Activated B cell treated with CpG ODN at 0.5 μM for 24 hours (primary cell): ENCODE measurements at regions of chr3 and their contacts with region 1.

Region 1: DNA sequence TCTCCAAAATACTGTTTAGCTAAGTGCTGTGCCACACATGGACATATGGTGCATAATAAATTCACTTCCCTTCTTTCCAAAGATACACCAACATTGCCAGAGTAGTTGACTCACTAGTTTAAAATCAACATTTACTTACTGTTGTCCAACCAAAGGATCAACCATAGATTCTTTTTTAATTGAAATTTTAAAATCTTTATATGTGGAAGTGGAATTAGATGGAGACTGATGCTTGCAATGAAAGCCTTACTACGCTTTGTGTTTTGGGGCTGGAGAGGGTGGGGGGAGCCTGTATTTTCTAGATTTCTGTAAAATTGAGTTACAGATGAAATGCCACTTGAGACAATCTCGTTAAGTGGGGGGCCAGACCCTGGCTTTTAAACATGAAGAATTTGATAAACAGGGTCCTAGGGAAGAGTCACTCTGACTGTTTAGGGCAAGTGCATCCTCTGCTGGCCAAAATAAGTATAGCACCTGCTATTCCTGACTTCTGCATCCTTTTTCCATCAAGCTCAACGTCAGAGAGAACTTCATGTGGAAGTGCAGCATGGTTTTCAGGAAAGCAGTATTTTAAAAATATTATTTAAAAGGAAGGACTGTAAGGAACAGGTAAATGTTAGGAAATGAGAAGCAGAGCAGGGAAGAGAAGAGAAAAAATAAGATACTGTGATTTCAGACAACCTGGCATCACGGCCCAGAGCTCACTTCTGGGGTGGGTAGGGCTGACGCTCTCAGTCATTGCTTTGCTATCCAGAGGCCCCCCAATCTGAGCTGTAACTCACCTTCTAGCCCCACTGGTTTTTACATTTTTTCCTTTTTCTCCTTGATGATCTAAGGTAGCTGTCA is 76.7 kb downstream of the BOC start:
- DNase-seq: no peak
- ATAC-seq: peak; percentile 45
- H3K4me3 Mint-ChIP-seq: no peak overlapping the region
- H3K27ac Mint-ChIP-seq: no peak overlapping the region
- H3K4me1 Mint-ChIP-seq: no peaks in the 10 kb centered on the region
- H3K27me3 Mint-ChIP-seq: no peaks in the 10 kb centered on the region
- CTCF ChIP-seq: peak; percentile 59

Region 2: GRCh38 chr3:112582244-112582874 is 705.7 kb before region 1 on chr3:
- CTCF ChIA-PET with region 1: interaction called, 12 read pairs
- POLR2A ChIA-PET with region 1: no interaction called
- intact Hi-C with region 1: loop called (anchors 1 kb)
- DNase-seq: no peak
- ATAC-seq: no peak
- H3K4me3 Mint-ChIP-seq: no peak overlapping the region
- H3K27ac Mint-ChIP-seq: no peak overlapping the region
- H3K4me1 Mint-ChIP-seq: peaks cover 42% of the 10 kb centered on the region
- H3K27me3 Mint-ChIP-seq: no peaks in the 10 kb centered on the region
- CTCF ChIP-seq: peak; percentile 59

Region 3: DNA sequence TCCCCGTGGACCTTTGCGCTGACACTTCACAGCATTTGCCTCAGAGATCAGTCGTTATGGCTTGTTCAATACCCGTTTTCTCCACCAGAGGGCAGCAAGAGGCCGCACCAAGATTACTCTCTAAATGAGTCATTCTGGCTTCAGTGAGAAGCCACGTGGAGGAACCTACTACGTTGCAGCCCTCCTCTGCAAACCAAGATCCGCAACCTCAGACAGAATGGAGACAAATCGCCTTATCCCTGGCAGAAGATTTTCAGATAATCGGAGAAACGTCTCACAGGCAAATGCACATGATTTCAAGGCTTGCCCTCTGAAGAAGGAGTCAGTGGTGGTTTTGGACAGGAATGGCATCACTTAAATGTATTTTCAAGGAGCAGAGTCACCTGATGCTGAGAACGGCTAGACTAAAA is 236.7 kb before region 1 on chr3:
- CTCF ChIA-PET with region 1: interaction called, 44 read pairs
- POLR2A ChIA-PET with region 1: no interaction called
- intact Hi-C with region 1: loop called (anchors 1 kb)
- DNase-seq: peak; percentile 68
- ATAC-seq: peak; percentile 99
- H3K4me3 Mint-ChIP-seq: no peak overlapping the region
- H3K27ac Mint-ChIP-seq: no peak overlapping the region
- H3K4me1 Mint-ChIP-seq: peaks cover 3% of the 10 kb centered on the region
- H3K27me3 Mint-ChIP-seq: no peaks in the 10 kb centered on the region
- CTCF ChIP-seq: no peak

Region 4: DNA sequence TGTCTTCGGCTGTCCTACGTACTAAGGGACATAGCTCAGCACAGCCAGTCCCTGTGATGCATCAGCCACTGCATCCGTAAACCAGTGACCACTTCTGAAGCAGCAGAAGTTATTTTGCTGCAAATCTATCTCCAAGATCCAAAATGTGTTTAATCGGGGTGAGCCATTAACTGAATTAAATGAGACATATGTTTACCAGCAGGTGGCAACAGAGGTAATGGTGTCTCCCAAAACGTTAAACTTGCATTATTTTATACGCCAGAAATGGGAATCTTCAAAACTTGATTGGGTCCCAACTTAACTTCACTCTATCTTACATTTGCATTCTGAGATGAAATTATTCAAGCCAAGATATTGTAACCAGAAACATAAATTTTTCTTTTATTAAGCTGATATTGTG is 152.0 kb before region 1 on chr3:
- CTCF ChIA-PET with region 1: interaction called, 43 read pairs
- POLR2A ChIA-PET with region 1: interaction called, 3 read pairs
- intact Hi-C with region 1: loop called (anchors 1 kb)
- DNase-seq: no peak
- ATAC-seq: no peak
- H3K4me3 Mint-ChIP-seq: no peak overlapping the region
- H3K27ac Mint-ChIP-seq: no peak overlapping the region
- H3K4me1 Mint-ChIP-seq: no peaks in the 10 kb centered on the region
- H3K27me3 Mint-ChIP-seq: no peaks in the 10 kb centered on the region
- CTCF ChIP-seq: no peak

Region 5: GRCh38 chr3:113205479-113205878 is 82.5 kb before region 1 on chr3:
- CTCF ChIA-PET with region 1: no interaction called
- POLR2A ChIA-PET with region 1: no interaction called
- intact Hi-C with region 1: no loop called
- DNase-seq: no peak
- ATAC-seq: no peak
- H3K4me3 Mint-ChIP-seq: no peak overlapping the region
- H3K27ac Mint-ChIP-seq: no peak overlapping the region
- H3K4me1 Mint-ChIP-seq: no peaks in the 10 kb centered on the region
- H3K27me3 Mint-ChIP-seq: peaks cover 44% of the 10 kb centered on the region
- CTCF ChIP-seq: no peak

Region 6: GRCh38 chr3:113575206-113575605 is 287.2 kb after region 1 on chr3:
- CTCF ChIA-PET with region 1: interaction called, 14 read pairs
- POLR2A ChIA-PET with region 1: no interaction called
- intact Hi-C with region 1: loop called (anchors 5 kb)
- DNase-seq: no peak
- ATAC-seq: no peak
- H3K4me3 Mint-ChIP-seq: no peak overlapping the region
- H3K27ac Mint-ChIP-seq: peak overlapping the region; percentile 31
- H3K4me1 Mint-ChIP-seq: peaks cover 5% of the 10 kb centered on the region
- H3K27me3 Mint-ChIP-seq: no peaks in the 10 kb centered on the region
- CTCF ChIP-seq: no peak

Region 7: DNA sequence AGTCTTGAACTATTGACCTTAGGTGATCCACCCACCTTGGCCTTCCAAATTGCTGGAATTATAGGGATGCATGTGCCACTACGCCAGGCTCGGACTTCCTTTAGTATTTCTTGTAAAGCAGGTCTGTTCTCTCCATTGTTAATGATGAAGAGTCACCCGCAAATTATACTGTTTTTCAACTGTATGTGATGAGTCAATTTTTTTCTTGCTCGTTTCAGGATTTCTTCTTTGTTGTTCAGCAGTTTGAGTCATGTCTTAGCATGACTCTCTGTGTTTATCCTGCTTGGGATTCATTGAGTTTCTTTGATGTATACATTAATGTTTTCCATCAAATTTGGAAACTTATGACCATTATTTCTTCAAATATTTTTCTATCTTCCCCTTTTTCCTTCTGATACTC is 579.5 kb after region 1 on chr3:
- CTCF ChIA-PET with region 1: no interaction called
- POLR2A ChIA-PET with region 1: no interaction called
- intact Hi-C with region 1: no loop called
- DNase-seq: no peak
- ATAC-seq: no peak
- H3K4me3 Mint-ChIP-seq: no peak overlapping the region
- H3K27ac Mint-ChIP-seq: no peak overlapping the region
- H3K4me1 Mint-ChIP-seq: no peaks in the 10 kb centered on the region
- H3K27me3 Mint-ChIP-seq: no peaks in the 10 kb centered on the region
- CTCF ChIP-seq: no peak